B cell (primary cell): ENCODE measurements at regions of chr2 and their contacts with region 1.

Region 1: GRCh38 chr2:32010670-32011484 is at the start of gene MEMO1:
- DNase-seq: peak; percentile 98
- ATAC-seq: peak; percentile 75
- H3K4me3 ChIP-seq: peak within 1 kb of the TSS; percentile 72 to 98 (median 80)
- H3K4me3 Mint-ChIP-seq: peak within 1 kb of the TSS; percentile 98
- H3K27ac ChIP-seq: peak within 1 kb of the TSS; percentile 80 to 94
- H3K27ac Mint-ChIP-seq: peak within 1 kb of the TSS; percentile 99
- H3K4me1 ChIP-seq: peaks cover 29% of the 10 kb centered on the region in 2 donors
- H3K4me1 Mint-ChIP-seq: peaks cover 39% of the 10 kb centered on the region
- H3K27me3 ChIP-seq: no peaks in the 10 kb centered on the region
- H3K27me3 Mint-ChIP-seq: no peaks in the 10 kb centered on the region
- CTCF ChIP-seq: no peak
- total RNA-seq, gene MEMO1: 64.2 and 65.8 TPM in 2 replicates

Region 2: GRCh38 chr2:31945572-31945935 is 65.3 kb before region 1 on chr2:
- CTCF ChIA-PET with region 1: no interaction called
- POLR2A ChIA-PET with region 1: no interaction called
- intact Hi-C with region 1: loop called (anchors 10 kb)
- DNase-seq: no peak
- ATAC-seq: no peak
- H3K4me3 ChIP-seq: no peak overlapping the region
- H3K4me3 Mint-ChIP-seq: no peak overlapping the region
- H3K27ac ChIP-seq: no peak overlapping the region
- H3K27ac Mint-ChIP-seq: no peak overlapping the region
- H3K4me1 ChIP-seq: peaks cover 4% of the 10 kb centered on the region in 2 donors
- H3K4me1 Mint-ChIP-seq: peaks cover 40% of the 10 kb centered on the region
- H3K27me3 ChIP-seq: no peaks in the 10 kb centered on the region
- H3K27me3 Mint-ChIP-seq: no peaks in the 10 kb centered on the region
- CTCF ChIP-seq: no peak

Region 3: GRCh38 chr2:32039447-32040219 is 28.8 kb after region 1 on chr2 and contains the start of gene DPY30:
- CTCF ChIA-PET with region 1: interaction called, 4 read pairs
- POLR2A ChIA-PET with region 1: interaction called, 11 read pairs
- intact Hi-C with region 1: loop called (anchors 1 kb)
- DNase-seq: peak; percentile 94
- ATAC-seq: peak; percentile 95
- H3K4me3 ChIP-seq: peak within 1 kb of the TSS; percentile 58 to 86 (median 78)
- H3K4me3 Mint-ChIP-seq: peak within 1 kb of the TSS; percentile 97
- H3K27ac ChIP-seq: peak within 1 kb of the TSS; percentile 73 to 76
- H3K27ac Mint-ChIP-seq: peak within 1 kb of the TSS; percentile 97
- H3K4me1 ChIP-seq: peaks cover 5 to 12% of the 10 kb centered on the region in 2 donors
- H3K4me1 Mint-ChIP-seq: peaks cover 19% of the 10 kb centered on the region
- H3K27me3 ChIP-seq: no peaks in the 10 kb centered on the region
- H3K27me3 Mint-ChIP-seq: no peaks in the 10 kb centered on the region
- CTCF ChIP-seq: no peak
- total RNA-seq, gene DPY30: 42.0 and 43.4 TPM in 2 replicates

Region 4: DNA sequence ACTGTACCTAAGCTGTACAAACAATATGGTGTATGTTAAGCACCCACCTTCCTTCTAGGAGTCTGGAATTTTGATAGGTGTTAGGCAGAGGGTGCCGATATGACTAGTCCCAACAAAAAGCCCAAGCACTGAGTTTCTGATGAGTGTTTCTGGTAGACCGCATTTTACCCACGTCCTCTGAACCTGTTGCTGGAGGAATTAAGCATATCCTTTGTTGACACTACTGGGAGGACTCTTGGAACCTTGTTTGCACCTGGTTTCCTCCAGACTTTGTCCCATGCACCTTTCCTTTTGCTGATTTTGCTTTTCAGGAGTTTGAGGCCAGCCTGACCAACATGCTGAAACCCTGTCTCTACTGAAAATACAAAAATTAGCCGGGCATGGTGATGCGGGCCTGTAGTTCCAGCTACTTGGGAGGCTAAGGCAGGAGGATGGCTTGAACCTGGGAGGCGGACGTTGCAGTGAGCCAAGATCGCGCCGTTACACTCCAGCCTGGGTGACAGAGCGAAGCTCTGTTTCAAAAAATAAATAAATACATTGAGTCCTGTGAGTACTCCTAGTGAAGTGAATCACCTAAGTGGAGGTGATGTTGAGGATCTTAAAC is 41.1 kb after region 1 on chr2:
- CTCF ChIA-PET with region 1: no interaction called
- POLR2A ChIA-PET with region 1: no interaction called
- intact Hi-C with region 1: no loop called
- DNase-seq: no peak
- ATAC-seq: no peak
- H3K4me3 ChIP-seq: no peak overlapping the region
- H3K4me3 Mint-ChIP-seq: no peak overlapping the region
- H3K27ac ChIP-seq: no peak overlapping the region
- H3K27ac Mint-ChIP-seq: no peak overlapping the region
- H3K4me1 ChIP-seq: no peaks in the 10 kb centered on the region
- H3K4me1 Mint-ChIP-seq: no peaks in the 10 kb centered on the region
- H3K27me3 ChIP-seq: no peaks in the 10 kb centered on the region
- H3K27me3 Mint-ChIP-seq: no peaks in the 10 kb centered on the region
- CTCF ChIP-seq: no peak

Region 5: DNA sequence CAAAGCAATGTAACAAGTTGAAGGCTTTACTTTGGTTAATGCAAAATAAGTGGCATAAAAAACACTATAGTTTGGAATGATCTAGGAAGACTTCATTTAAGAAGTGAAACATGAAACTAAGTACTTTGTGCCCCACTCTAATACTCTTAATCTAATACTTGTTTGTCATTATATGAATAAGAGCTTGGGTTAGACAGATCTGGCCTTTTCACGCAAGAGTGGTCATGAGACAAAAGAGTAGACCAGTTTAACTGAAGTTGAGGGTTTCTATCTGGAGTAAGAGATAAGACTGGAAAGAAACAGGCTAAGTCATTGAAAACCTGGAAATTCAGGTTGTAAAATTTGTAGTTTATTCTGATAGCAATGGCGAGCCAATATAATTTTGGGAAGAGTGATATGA is 157.6 kb after region 1 on chr2:
- CTCF ChIA-PET with region 1: no interaction called
- POLR2A ChIA-PET with region 1: no interaction called
- intact Hi-C with region 1: loop called (anchors 1 kb)
- DNase-seq: no peak
- ATAC-seq: no peak
- H3K4me3 ChIP-seq: no peak overlapping the region
- H3K4me3 Mint-ChIP-seq: no peak overlapping the region
- H3K27ac ChIP-seq: no peak overlapping the region
- H3K27ac Mint-ChIP-seq: no peak overlapping the region
- H3K4me1 ChIP-seq: peaks cover 12 to 18% of the 10 kb centered on the region in 2 donors
- H3K4me1 Mint-ChIP-seq: peaks cover 30% of the 10 kb centered on the region
- H3K27me3 ChIP-seq: no peaks in the 10 kb centered on the region
- H3K27me3 Mint-ChIP-seq: no peaks in the 10 kb centered on the region
- CTCF ChIP-seq: no peak

Region 6: DNA sequence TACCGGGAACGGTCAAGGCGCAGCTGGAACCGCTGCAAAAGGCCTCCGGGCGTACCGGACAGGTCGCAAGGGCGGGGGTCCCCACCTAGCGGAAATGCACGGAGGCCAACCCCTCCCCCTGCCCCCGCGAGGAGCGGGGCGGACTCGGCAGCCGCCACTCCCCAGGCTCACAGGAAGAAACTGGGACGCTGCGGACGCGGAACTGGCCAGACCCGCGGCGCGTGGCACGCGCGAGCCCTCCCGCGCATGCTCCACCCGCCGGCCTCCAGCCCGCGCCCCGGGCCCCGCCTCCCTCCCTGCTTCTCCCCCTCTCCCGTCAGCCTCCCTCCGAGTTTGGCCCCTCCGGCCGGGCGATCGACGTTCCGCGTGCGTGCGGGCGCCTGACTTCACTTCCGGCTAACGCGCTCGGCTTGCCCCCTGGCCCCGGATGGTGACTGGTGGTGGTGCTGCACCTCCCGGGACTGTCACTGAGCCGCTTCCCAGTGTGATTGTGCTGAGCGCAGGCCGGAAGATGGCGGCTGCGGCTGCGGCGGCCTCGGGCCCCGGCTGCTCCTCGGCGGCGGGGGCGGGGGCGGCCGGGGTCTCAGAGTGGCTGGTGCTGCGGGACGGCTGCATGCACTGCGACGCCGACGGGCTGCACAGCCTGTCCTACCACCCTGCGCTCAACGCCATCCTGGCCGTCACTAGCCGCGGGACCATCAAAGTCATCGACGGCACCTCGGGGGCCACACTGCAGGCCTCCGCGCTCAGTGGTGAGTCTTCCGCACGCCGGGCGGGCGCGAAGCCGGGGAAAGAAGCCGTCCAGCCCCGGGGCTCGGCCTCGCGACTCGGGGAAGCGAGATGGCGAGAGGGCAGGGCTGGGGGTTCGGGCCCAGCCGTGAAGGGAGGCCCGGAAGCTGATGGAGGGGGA is 346.1 kb after region 1 on chr2 and contains the start of gene BIRC6:
- CTCF ChIA-PET with region 1: no interaction called
- POLR2A ChIA-PET with region 1: no interaction called
- intact Hi-C with region 1: loop called (anchors 1 kb)
- DNase-seq: peak; percentile 97
- ATAC-seq: peak; percentile 86
- H3K4me3 ChIP-seq: peak within 1 kb of the TSS; percentile 63 to 98 (median 97)
- H3K4me3 Mint-ChIP-seq: peak within 1 kb of the TSS; percentile 91
- H3K27ac ChIP-seq: peak within 1 kb of the TSS; percentile 91 to 92
- H3K27ac Mint-ChIP-seq: peak within 1 kb of the TSS; percentile 98
- H3K4me1 ChIP-seq: peaks cover 34 to 36% of the 10 kb centered on the region in 2 donors
- H3K4me1 Mint-ChIP-seq: peaks cover 40% of the 10 kb centered on the region
- H3K27me3 ChIP-seq: no peaks in the 10 kb centered on the region
- H3K27me3 Mint-ChIP-seq: no peaks in the 10 kb centered on the region
- CTCF ChIP-seq: no peak
- total RNA-seq, gene BIRC6: 166 and 196 TPM in 2 replicates